Cardiac septum (tissue), 1 donor: ENCODE measurements at regions of chr1 and their contacts with region 1.

Region 1: DNA sequence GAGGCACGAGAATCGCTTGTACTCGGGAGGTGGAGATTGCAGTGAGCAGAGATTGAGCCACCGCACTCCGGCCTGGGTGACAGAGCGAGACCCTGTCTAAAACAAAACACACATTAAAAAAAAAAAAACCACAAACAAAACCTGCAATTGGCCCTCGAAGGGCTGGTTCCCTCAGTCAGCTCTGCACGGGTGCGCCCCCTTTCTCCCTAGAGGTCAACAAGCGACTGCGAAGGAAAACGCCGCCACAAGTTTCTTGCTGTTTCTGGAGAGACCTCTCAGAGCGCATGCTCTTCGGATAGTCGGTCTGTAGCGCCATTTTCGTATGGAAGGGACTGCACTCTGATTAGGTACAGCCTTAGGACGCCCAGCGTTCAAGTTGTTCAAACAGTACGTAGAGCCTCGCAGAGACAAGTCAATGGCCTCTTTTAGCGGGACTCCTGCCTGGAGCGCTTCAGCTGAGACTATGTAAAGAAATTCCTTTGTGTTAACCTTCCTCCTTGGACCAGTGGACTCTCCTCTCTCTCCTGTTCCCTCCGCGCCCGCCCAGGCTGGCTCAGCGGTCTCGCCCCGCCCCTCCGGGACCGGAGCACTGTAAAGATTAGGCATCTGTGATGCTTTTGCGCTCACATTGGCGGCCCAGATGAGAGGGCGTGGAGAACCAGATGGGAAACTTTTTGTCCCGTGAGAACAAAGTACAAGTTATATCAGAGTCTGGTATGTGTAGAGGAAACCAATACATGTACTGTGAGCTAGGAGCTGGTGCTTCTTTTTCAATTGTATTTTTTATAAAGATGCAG is 1.0 kb upstream of the CDC14A start:
- DNase-seq: peak; percentile 94

Region 2: DNA sequence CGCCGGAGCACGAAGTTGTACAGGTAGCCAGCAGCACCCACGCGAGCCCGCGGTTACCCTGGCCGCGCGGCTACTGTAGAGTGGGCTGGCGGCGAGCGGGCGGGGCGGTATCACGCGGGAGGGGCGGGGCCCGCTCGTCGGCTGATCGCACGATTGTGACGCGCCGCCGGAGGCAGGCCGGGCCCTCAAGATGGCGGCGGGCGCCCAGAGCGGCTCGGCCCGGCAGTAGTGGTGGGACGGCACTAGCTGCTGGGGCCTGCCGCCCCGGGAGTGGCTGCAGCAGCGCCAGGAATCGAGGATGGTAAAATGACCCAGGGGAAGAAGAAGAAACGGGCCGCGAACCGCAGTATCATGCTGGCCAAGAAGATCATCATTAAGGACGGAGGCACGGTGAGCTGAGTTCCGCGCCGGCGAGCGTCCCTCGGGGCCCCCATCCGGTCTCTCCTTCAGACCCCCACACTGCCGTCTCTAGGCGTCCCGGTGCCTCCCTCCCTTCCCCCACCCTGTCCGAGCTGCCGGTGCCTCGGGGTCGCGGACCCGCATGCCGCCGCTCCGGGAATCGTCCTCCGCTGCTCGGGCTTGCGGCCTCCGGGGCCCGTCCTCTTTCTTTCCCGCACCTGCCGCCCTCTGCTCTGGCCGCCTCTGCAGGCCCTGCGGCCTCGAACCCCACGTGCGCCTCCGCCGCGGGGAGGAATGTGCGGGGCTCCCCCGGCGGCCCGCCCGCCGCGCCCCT is 313.2 kb before region 1 on chr1:
- intact Hi-C with region 1: loop called (anchors 5 kb)
- DNase-seq: peak; percentile 96

Region 3: GRCh38 chr1:100249537-100250257 is 101.6 kb before region 1 on chr1 and contains the start of gene DBT:
- intact Hi-C with region 1: loop called (anchors 2 kb)
- DNase-seq: peak; percentile 97
- total RNA-seq, gene DBT: 29.3 TPM

Region 4: GRCh38 chr1:100265931-100266740 is 85.2 kb before region 1 on chr1 and contains the start of gene RTCA:
- intact Hi-C with region 1: loop called (anchors 1 kb)
- DNase-seq: peak; percentile 99
- total RNA-seq, gene RTCA: 34.4 TPM

Region 5: GRCh38 chr1:100328133-100328532 is 23.2 kb before region 1 on chr1:
- intact Hi-C with region 1: no loop called
- DNase-seq: no peak

Region 6: DNA sequence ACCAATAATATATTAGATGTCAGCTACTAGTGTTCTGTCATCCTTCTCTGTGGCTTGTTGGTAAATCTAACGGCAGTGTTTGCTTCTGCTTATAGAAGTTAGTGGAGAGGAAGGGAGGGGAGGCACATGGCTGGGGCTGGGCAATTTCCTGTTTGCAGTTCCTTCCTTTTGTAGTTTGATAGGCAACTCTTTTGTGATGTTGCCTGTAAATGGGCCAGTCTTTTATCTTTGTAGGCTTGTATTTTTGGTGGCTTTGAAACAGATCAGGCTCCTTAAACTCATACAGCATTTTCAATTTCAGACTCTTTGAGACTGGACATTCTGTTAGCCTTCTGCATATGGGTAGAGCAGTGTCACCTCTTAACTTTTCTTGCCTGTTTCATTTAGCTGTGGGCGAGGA is 49.1 kb after region 1 on chr1:
- intact Hi-C with region 1: loop called (anchors 2 kb)
- DNase-seq: peak; percentile 87

Region 7: DNA sequence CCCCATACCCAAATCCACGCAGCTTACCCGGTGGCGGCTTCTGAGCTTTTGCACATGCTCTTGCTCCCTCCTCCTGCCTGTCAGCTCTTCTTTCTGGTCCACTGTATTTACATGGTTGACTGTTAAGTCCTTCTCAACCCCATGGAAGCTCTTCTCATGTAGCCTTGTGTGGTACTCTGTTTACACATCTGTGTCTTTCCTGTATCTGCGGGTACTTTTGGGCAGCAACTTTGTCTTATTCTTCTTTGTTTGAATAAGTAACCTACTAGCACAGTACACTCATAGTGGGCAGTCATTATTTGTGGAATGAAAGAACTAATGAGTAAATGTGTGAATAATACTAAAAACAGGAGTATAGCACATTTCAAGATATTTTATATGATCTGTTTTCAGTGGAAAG is 98.2 kb after region 1 on chr1:
- intact Hi-C with region 1: loop called (anchors 5 kb)
- DNase-seq: no peak